Dorsolateral prefrontal cortex (tissue), 120 donors: ENCODE measurements at regions of chr14 and their contacts with region 1.

Region 1: DNA sequence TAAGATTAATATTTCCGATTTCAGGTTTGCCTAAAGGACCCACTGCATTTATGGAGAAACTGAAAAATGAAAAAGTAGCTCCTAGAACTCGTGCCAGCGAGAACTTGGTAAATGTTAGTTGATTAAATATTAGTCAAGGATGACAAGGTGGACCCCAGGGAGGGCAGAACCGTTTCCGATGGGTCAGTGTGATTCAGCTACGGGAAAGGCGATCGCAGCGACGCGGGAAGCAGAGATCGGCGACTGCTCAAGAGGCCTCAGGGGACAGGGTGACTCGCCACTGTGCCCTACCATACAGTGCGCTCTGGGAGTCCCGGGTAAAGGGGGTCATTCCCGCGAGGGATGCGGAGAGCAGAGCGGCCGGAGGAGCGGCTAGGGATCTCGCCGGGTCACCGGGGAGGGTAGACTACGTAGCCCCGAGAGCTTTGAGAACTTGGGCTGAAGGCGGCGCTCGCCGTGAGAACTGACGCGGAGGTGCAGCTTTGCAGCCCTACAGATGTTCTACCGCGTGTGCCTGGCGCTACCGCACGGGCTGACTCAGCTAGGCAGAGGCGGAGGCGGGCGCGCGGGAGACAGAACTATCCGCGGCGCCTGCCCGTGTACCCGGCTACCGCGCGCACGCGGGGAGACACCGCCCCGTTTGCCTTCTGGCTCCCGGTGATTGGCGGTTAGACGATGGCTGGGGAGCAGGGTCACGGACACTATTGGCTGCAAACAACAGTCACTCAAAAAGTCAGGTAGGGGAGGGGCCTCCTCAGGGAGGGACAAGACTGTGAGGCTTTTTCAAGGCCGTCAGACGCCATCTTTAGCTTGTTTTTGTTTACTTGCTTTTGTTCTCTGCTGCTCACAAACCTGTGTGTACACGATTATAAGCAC is 3.2 kb downstream of the C14orf93 start:
- DNase-seq: peak; percentile 93 to 99 (median 98)
- H3K4me3 ChIP-seq: peak overlapping the region; percentile 62 to 98 (median 79)
- H3K27ac ChIP-seq: peak overlapping the region; percentile 91 to 100 (median 99)
- H3K27me3 ChIP-seq: no peaks in the 10 kb centered on the region
- CTCF ChIP-seq: peak in 49 of 56 donors; percentile 2 to 65 (median 41)

Region 2: GRCh38 chr14:22678221-22678620 is 328.6 kb before region 1 on chr14:
- intact Hi-C with region 1: no loop called
- DNase-seq: no peak
- H3K4me3 ChIP-seq: no peak overlapping the region
- H3K27ac ChIP-seq: no peak overlapping the region
- H3K27me3 ChIP-seq: peaks cover 0 to 20% (median 4%) of the 10 kb centered on the region in 45 donors
- CTCF ChIP-seq: no peak

Region 3: GRCh38 chr14:23034483-23035302 is 27.9 kb after region 1 on chr14 and contains the start of gene PSMB5:
- intact Hi-C with region 1: loop called (anchors 2 kb)
- DNase-seq: peak; percentile 80 to 94 (median 90)
- H3K4me3 ChIP-seq: peak within 1 kb of the TSS; percentile 68 to 100 (median 91)
- H3K27ac ChIP-seq: peak within 1 kb of the TSS; percentile 87 to 100 (median 98)
- H3K27me3 ChIP-seq: no peaks in the 10 kb centered on the region
- CTCF ChIP-seq: peak in 27 of 56 donors; percentile 1 to 54 (median 23)
- total RNA-seq, gene PSMB5: 63.4 to 136 (median 100) TPM

Region 4: GRCh38 chr14:23430788-23431085 is 424.0 kb after region 1 on chr14:
- intact Hi-C with region 1: no loop called
- DNase-seq: peak in 8 of 10 donors; percentile 42 to 86 (median 72)
- H3K4me3 ChIP-seq: no peak overlapping the region
- H3K27ac ChIP-seq: peak overlapping the region in 56 of 59 donors; percentile 46 to 94 (median 82)
- H3K27me3 ChIP-seq: no peaks in the 10 kb centered on the region
- CTCF ChIP-seq: no peak